Endothelial cell of umbilical vein (primary cell): ENCODE measurements at regions of chr11 and their contacts with region 1.

Region 1: DNA sequence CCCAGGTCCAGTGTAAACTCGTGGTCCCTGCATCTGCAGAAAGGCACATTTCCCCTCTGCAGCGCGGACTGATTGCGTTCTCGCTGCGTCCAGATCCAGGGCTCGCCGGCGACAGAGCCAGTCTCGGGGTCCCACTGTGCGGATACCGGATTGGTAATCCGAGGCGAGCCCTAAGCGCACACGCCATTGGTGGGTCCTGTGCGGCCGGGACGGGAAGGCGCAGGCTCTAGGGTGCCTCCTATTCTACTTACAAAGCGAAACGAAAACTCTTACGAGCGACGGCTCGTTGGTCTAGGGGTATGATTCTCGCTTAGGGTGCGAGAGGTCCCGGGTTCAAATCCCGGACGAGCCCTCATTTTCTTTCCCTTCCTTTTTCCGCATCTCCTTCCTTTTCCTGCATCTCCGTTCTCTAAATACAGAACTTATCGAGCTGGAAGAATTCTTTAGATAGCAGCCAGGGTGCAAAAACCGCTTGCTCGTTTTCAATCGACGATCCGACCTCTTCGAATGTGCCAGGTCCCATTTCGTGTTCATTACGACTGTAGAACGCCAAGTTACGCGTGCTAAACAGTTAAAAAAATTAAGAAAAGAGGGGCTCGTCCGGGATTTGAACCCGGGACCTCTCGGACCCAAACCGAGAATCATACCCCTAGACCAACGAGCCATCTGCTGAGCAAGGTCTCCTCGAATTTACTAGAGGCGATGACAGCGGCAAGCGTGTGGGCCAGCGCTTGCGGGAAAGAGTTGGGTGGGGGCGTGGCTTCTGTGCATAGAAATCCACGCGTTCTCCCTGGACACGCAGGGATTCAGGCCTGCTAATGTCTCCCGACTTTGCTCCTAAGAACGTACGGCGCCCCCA is 29.2 kb upstream of the WNT11 start:
- DNase-seq: peak; percentile 95
- H3K4me3 ChIP-seq: peak overlapping the region; percentile 68 to 84 (median 76)
- H3K27ac ChIP-seq: no peak overlapping the region
- H3K4me1 ChIP-seq: peaks cover 8% of the 10 kb centered on the region
- H3K27me3 ChIP-seq: no peaks in the 10 kb centered on the region
- CTCF ChIP-seq: no peak
- POLR2A ChIP-seq: no peak

Region 2: GRCh38 chr11:76293189-76293631 is 57.7 kb after region 1 on chr11:
- CTCF ChIA-PET with region 1: no interaction called
- POLR2A ChIA-PET with region 1: no interaction called
- dilution Hi-C with region 1: no loop called
- intact Hi-C with region 1: loop called (anchors 5 kb)
- DNase-seq: no peak
- H3K4me3 ChIP-seq: no peak overlapping the region
- H3K27ac ChIP-seq: no peak overlapping the region
- H3K4me1 ChIP-seq: peaks cover under 1% of the 10 kb centered on the region
- H3K27me3 ChIP-seq: no peaks in the 10 kb centered on the region
- CTCF ChIP-seq: no peak
- POLR2A ChIP-seq: no peak

Region 3: DNA sequence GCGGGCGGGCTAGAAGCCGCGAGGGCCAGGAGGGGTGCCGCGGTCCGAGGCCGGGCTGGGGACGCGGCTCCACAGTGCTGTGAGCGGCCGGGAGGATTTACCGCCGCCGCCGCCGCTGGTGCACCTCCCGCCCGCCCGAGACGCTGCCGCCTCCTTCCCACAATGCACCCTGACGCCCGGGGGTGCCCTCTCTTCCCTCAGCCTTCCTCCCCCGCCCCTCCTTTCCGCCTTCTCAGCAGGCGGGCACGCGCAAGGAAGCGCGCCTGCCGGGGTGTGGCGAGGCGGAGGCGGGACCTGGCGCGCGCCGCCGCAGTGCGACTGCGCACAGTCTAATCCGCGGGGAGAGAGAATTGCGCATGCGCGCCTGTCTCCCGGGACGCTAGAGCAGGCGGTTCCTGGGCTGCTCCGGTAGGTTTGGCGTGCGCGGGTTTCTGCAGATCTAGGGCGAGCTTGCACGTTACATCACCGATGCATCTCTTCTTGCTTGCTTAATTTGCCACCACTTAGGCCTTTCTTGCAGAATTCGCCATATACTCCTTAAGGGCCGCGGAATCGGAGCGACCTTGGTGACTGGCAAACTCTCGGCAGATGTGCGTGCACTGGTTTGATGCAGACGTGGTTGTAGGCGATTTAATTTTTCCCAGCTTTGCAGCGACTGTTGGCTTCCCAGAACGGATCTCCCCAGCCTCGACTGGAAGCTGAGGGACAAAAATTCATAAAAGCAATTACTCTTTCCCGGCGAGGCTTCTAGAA is 145.7 kb after region 1 on chr11 and contains the starts of genes GVQW3 and THAP12:
- CTCF ChIA-PET with region 1: no interaction called
- POLR2A ChIA-PET with region 1: no interaction called
- dilution Hi-C with region 1: no loop called
- intact Hi-C with region 1: loop called (anchors 5 kb)
- DNase-seq: peak; percentile 99
- H3K4me3 ChIP-seq: peak within 1 kb of the TSS; percentile 71 to 89 (median 82)
- H3K27ac ChIP-seq: peak within 1 kb of the TSS; percentile 27
- H3K4me1 ChIP-seq: peaks cover 18% of the 10 kb centered on the region
- H3K27me3 ChIP-seq: no peaks in the 10 kb centered on the region
- CTCF ChIP-seq: peak; percentile 7 to 8
- POLR2A ChIP-seq: peak; percentile 82
- total RNA-seq, gene GVQW3: 0.99 and 2.8 TPM in 2 replicates
- total RNA-seq, gene THAP12: 32.3 and 36.7 TPM in 2 replicates